ENCODE measurements at regions of chr3 and their contacts with region 1.

Region 1: GRCh38 chr3:195591219-195591618 is 7.5 kb upstream of the APOD start:
- DNase-seq: no peak
- H3K4me3 ChIP-seq: no peak overlapping the region
- H3K27ac ChIP-seq: peak overlapping the region; percentile 54 to 85
- H3K4me1 ChIP-seq: peaks cover 0 to 6% of the 10 kb centered on the region in 2 donors
- H3K27me3 ChIP-seq: no peaks in the 10 kb centered on the region
- CTCF ChIP-seq: no peak
- POLR2A ChIP-seq: no peak

Region 2: GRCh38 chr3:195003006-195003892 is 588.0 kb before region 1 on chr3:
- intact Hi-C with region 1: no loop called
- DNase-seq: peak in 1 of 2 donors; percentile 54
- H3K4me3 ChIP-seq: peak overlapping the region in 1 of 3 donors; percentile 31
- H3K27ac ChIP-seq: peak overlapping the region; percentile 68 to 84
- H3K4me1 ChIP-seq: peaks cover 5% of the 10 kb centered on the region in 2 donors
- H3K27me3 ChIP-seq: no peaks in the 10 kb centered on the region
- CTCF ChIP-seq: no peak
- POLR2A ChIP-seq: no peak

Region 3: DNA sequence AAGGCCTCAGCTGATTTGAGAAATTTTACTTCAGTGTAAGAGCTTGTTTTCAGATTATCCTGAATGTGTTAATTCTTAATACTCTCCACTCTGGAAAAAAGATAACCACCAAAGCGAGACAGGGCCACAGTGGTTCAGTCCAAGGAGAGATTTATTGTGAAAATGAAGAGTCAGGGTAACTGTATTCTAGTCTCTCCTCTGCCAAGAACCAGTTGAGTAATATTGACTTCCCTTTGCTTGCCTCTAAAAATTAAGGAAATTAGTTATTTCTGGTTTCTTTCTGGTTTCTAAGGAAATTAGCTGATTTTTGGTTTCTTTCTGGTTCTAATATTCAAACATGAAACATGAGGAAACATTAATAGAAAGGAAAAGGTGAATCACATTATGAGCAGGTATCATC is 83.0 kb before region 1 on chr3:
- intact Hi-C with region 1: loop called (anchors 5 kb)
- DNase-seq: no peak
- H3K4me3 ChIP-seq: no peak overlapping the region
- H3K27ac ChIP-seq: no peak overlapping the region
- H3K4me1 ChIP-seq: no peaks in the 10 kb centered on the region
- H3K27me3 ChIP-seq: no peaks in the 10 kb centered on the region
- CTCF ChIP-seq: no peak
- POLR2A ChIP-seq: no peak